ENCODE measurements at regions of chr4 and their contacts with region 1.

Region 1: GRCh38 chr4:110503270-110504083 is 27.5 kb downstream of the ENPEP start:
- DNase-seq: no peak
- H3K4me3 ChIP-seq: no peak overlapping the region
- H3K27ac ChIP-seq: no peak overlapping the region
- H3K4me1 ChIP-seq: no peaks in the 10 kb centered on the region
- H3K27me3 ChIP-seq: no peaks in the 10 kb centered on the region
- CTCF ChIP-seq: no peak
- EP300 ChIP-seq: no peak
- RAD21 ChIP-seq: no peak

Region 2: DNA sequence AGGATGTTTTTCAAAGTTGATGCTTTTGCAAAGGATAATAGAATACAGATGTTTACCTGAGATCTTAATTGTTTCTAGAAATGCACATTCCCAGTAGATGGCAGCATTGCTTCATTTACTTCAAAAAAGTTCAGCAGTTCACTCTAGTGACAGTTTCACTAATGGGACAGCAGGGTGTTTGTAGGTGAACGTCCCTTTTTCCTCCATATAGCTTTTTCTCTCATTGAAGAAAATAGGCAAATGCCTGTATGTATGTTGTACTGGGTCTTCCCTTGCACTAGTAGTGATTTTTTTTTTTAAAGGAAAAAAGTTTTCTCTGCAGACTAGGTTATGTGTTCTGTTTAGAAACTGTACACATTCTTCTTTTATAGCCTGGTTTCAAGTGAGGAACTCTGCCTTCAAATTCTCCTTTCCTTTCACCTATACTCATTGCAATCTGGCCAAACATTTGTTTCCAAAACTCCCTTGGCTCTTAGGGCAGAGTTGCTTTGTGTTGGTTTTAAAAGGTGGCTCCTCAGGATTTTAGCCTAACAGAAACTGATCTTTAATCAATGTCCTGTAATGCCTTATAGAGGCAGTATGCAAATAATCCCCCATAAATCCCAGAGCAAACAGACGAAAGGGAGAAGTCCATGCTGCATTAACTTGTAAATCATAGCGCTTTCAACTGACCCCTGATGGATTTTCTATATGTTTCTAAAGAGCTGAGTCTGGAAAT is 504.5 kb before region 1 on chr4:
- CTCF ChIA-PET with region 1: interaction called, 591 read pairs
- POLR2A ChIA-PET with region 1: no interaction called
- DNase-seq: peak; percentile 55
- H3K4me3 ChIP-seq: no peak overlapping the region
- H3K27ac ChIP-seq: no peak overlapping the region
- H3K4me1 ChIP-seq: no peaks in the 10 kb centered on the region; a peak in 1 of 4 replicates
- H3K27me3 ChIP-seq: no peaks in the 10 kb centered on the region; the same call in 1 of the 2 replicates
- CTCF ChIP-seq: peak; percentile 82
- EP300 ChIP-seq: no peak
- RAD21 ChIP-seq: peak; percentile 90

Region 3: GRCh38 chr4:110005461-110006056 is 497.9 kb before region 1 on chr4:
- CTCF ChIA-PET with region 1: interaction called, 591 read pairs
- POLR2A ChIA-PET with region 1: no interaction called
- DNase-seq: peak; percentile 52
- H3K4me3 ChIP-seq: no peak overlapping the region
- H3K27ac ChIP-seq: no peak overlapping the region
- H3K4me1 ChIP-seq: no peaks in the 10 kb centered on the region
- H3K27me3 ChIP-seq: no peaks in the 10 kb centered on the region
- CTCF ChIP-seq: peak; percentile 90
- EP300 ChIP-seq: no peak
- RAD21 ChIP-seq: peak; percentile 96

Region 4: DNA sequence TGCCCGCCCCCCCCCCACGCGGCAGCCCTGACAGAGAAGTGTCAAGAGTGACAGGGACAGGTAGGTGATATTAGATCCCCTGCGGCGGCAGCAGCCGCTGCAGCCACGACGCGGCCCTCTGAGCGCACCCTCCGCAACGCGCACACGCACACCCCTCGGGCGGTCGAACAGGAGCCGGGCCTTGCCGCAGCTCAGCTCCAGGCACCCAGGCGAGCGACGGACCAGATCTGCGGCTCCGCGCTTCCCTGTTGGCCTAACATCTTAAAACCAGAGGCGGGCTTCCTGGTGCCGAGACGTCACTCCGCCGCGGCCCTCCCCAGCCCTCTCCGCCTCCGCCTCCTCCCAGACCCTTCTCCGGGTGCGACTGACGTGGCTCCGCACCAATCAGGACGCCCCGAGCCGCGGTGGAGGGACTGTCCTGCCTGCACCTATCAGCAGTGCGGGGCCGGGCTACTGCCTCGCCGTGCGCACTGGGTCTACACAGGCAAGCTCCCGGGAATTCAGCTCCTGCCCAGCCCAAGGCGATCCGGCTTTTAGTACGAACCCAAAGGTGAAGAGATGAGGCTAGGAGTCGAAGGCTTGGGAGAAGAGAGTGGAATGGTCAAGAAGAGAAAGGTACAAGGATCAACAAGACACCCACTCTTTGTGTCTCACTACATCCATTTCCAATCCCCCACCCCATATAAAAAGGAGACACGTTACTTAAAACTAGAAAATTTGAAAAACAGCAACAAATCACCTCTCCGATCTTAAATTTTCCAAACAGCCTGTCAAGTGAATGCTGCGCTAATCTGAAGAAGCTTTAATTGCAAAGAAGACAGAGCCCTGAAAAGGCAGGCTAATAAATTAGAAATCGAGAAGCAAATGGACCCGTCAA is 119.6 kb after region 1 on chr4 and contains the start of gene PITX2:
- CTCF ChIA-PET with region 1: no interaction called
- POLR2A ChIA-PET with region 1: no interaction called
- DNase-seq: peak; percentile 89
- H3K4me3 ChIP-seq: peak within 1 kb of the TSS; percentile 23 to 33; a peak in 3 of 4 replicates
- H3K27ac ChIP-seq: no peak within 1 kb of the TSS
- H3K4me1 ChIP-seq: peaks cover 0 to 4% of the 10 kb centered on the region in 2 experiments; a peak in 1 of 4 replicates
- H3K27me3 ChIP-seq: peaks cover 98% of the 10 kb centered on the region
- CTCF ChIP-seq: no peak
- EP300 ChIP-seq: no peak
- RAD21 ChIP-seq: no peak
- polyA plus RNA-seq, gene PITX2: not detected in 2 replicates